Spleen (tissue), 13 donors: ENCODE measurements at regions of chr5 and their contacts with region 1.

Region 1: DNA sequence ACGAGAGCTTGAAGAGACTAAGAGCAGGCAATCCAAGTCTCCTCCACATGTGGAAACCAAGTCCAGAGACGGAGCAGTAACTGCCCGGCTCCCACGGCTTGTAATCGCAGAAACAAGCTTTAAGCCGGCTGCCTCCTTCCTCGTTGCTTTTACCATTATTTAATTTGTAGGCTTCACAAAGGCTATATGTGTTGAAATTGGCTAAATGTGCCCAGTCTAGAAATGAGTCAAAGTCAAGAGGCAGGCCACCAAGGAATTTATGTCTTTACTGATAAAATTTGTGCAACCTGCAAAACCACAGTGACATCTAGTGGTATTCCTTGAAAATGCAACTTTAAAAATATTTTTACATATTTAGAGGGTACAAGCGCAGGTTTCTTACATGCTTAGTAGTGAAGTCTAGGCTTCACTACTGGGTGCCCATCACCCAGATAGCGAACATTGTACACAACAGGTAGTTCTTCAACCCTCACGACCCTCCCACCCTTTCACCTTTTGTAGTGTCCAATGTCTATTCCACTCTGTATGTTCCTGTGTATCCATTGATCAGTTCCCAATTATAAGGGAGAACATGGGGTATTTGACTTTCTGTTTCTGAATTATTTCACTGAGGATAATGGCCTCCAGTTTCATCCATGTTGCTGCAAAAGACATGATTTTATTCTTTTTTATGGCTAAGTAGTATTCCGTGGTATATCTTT is 33.5 kb upstream of the EBF1 start:
- DNase-seq: no peak
- H3K4me3 ChIP-seq: no peak overlapping the region
- H3K27ac ChIP-seq: no peak overlapping the region
- H3K4me1 ChIP-seq: peaks cover 0 to 6% (median 0%) of the 10 kb centered on the region in 6 donors
- H3K27me3 ChIP-seq: peaks cover 0 to 10% (median 0%) of the 10 kb centered on the region in 7 donors
- CTCF ChIP-seq: peak; percentile 33 to 76 (median 59)
- POLR2A ChIP-seq: no peak

Region 2: DNA sequence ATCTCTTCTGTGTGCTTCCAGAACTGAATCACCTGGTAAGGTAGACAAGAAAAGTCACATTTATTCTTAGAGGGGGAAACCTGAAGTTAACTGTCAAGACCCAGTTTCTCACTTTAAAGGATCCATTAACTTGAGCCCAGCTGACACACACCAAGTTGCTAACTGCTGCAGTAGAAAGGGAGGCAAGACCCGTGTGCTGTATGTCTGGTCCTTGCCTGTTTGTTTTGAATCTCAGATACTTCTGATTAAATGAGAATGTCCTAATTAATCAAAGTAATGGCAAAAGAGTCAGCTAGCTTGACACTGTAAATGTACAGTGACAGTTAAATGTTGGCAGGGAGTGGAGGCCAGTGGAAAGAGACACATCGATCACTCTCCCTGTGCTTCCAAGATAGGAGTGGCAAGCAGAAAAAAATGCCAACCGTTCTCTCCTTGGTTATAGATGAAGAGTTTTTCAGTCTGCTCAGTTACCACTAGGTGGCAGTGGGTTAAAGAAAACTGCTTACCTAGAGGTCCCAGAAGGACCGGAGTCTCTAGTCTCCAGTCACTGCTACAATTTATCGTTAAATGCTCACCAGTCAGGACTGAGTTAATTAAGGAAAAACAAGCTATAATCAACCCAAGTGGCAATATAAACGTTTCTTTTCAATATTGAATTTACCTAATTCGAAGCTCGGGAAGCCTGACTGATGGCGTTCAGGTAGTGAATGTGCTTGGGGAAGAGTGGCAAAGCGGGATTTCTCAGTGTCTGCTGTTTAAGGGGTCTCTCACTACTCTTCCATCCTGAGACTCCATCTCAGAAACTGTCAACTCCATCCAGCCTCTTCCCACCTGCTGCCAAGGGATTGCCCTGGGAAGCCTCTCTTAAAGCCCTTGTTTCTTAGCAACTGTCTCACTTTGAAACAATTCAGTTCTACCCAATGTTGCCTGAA is 1371.2 kb before region 1 on chr5:
- intact Hi-C with region 1: loop called (anchors 5 kb)
- DNase-seq: no peak
- H3K4me3 ChIP-seq: no peak overlapping the region
- H3K27ac ChIP-seq: no peak overlapping the region
- H3K4me1 ChIP-seq: peaks cover 0 to 7% (median 6%) of the 10 kb centered on the region in 6 donors
- H3K27me3 ChIP-seq: no peaks in the 10 kb centered on the region
- CTCF ChIP-seq: peak in 10 of 11 experiments; percentile 18 to 80 (median 67)
- POLR2A ChIP-seq: no peak

Region 3: GRCh38 chr5:158074992-158075769 is 1058.0 kb before region 1 on chr5:
- intact Hi-C with region 1: loop called (anchors 10 kb)
- DNase-seq: no peak
- H3K4me3 ChIP-seq: peak overlapping the region in 2 of 8 donors; percentile 13 to 47
- H3K27ac ChIP-seq: no peak overlapping the region
- H3K4me1 ChIP-seq: peaks cover 0 to 18% (median 4%) of the 10 kb centered on the region in 6 donors
- H3K27me3 ChIP-seq: no peaks in the 10 kb centered on the region
- CTCF ChIP-seq: peak; percentile 34 to 83 (median 65)
- POLR2A ChIP-seq: no peak

Region 4: DNA sequence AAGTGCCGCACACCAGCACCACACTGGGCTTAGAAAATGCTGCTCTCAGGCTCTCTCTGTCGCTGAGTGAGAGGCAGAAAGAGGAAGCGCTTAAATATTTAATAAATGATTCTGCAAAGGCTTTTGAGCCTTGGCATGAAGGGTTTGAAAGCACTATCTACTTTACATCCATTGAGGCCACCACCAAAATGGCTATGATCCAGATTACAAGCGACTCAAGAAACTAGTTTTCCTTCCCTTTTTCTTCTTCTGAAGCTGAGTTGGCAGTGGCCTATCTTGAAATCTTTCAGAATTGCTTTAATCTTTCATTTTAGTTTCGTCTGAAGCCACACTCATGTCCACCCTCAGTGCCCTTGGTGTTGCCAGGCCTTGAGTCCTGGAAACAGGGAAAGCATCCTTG is 93.0 kb before region 1 on chr5:
- intact Hi-C with region 1: no loop called
- DNase-seq: no peak
- H3K4me3 ChIP-seq: no peak overlapping the region
- H3K27ac ChIP-seq: peak overlapping the region in 7 of 8 donors; percentile 8 to 61 (median 51)
- H3K4me1 ChIP-seq: peaks cover 0 to 48% (median 26%) of the 10 kb centered on the region in 6 donors
- H3K27me3 ChIP-seq: no peaks in the 10 kb centered on the region
- CTCF ChIP-seq: no peak
- POLR2A ChIP-seq: no peak